Heart left ventricle (tissue), 16 donors: ENCODE measurements at regions of chr14 and their contacts with region 1.

Region 1: DNA sequence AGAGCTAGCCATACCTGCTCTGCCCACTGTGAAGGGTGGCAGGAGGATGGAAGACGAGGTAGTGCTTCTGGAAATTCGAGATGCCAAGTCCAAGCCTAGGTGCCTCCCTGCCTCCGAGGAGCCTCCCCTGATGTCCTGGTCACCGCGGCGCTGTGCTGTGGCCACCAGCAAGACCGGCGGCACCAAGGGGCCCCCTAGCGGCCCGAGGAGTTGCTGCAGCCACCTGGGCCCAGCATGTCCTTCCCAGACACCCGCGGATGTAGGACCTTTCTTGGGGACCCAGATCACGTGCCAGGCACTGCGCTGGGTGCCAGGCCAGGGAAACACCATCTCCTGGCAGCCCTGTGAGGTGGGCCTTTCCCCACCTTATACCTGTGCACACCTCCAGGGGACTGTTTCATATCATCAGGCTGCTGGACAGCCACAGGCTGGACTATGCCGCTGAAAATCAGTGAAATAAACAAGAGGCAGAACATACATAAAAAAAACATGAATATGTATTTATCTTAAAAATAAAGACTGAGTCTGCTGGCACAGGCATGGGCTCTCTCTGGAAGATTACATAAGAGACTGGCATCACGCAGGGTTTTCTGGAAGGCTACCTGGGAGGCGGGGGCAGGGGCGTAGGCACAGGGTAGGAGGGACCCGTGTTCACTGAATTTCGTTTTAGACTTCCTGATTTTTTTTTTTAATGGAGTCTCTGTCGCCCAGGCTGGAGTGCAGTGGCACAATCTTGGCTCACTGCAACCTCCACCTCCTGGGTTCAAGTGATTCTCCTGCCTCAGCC is 15.9 kb upstream of the HHIPL1 start:
- DNase-seq: peak; percentile 76 to 88 (median 78)
- ATAC-seq: peak; percentile 61 to 95 (median 89)
- H3K4me3 ChIP-seq: no peak overlapping the region
- H3K27ac ChIP-seq: no peak overlapping the region
- H3K4me1 ChIP-seq: peaks cover 0 to 7% (median 2%) of the 10 kb centered on the region in 12 donors
- H3K27me3 ChIP-seq: no peaks in the 10 kb centered on the region
- CTCF ChIP-seq: peak; percentile 94 to 100 (median 98)
- POLR2A ChIP-seq: no peak

Region 2: GRCh38 chr14:99518441-99519346 is 110.3 kb before region 1 on chr14:
- intact Hi-C with region 1: loop called (anchors 1 to 2 kb)
- DNase-seq: peak; percentile 59 to 87 (median 71)
- ATAC-seq: peak; percentile 46 to 62 (median 54)
- H3K4me3 ChIP-seq: no peak overlapping the region
- H3K27ac ChIP-seq: no peak overlapping the region
- H3K4me1 ChIP-seq: peaks cover 0 to 31% (median 20%) of the 10 kb centered on the region in 12 donors
- H3K27me3 ChIP-seq: no peaks in the 10 kb centered on the region
- CTCF ChIP-seq: peak; percentile 93 to 99 (median 98)
- POLR2A ChIP-seq: no peak

Region 3: DNA sequence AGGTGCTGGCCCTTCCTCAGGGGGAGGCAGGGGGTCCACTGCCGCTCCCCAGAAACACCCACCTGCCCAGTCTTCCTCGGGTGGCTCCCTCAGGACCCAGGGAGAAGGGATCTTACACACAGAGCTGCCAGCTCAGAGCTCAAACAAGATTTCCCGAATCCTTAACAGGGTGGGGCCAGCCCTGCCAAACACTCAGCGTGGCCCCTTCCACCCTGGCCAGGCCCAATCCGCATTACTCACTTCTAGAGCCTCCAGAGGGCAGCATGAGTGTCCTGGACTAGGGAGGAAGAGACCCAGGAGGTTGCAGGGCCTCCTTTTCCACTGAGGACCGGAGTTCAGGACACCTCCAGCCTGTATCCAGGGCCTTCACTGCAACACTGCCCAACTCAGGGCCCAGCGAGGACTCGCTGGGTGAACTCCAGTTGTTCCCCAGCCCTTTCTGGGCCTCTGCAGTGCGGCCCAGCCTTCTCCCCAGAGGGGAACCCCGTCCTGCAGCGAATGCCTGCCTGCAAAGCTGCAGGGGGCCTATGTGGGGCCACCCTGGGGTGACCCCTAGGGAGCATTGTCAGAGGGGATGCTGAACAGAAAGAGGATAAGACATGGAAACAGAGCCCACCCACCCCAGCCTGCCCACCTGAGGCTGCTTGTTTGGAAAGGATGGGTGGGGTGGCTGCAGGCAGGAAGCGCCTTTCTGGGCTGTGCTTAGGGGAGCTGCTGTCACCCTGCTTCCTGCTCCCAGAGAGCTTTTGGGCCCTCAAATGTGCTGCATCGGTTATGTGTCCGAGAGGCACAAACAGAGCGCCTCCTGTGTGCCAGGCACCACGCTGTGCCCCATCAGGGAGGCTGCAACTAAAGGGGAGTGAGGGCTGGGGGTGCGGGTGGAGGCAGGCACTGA is 104.0 kb before region 1 on chr14:
- intact Hi-C with region 1: loop called in 1 of 10 experiments (anchors 2 kb)
- DNase-seq: peak in 3 of 5 donors; percentile 25 to 46 (median 40)
- ATAC-seq: peak in 3 of 4 donors; percentile 33 to 67 (median 46)
- H3K4me3 ChIP-seq: no peak overlapping the region
- H3K27ac ChIP-seq: peak overlapping the region in 11 of 12 donors; percentile 26 to 84 (median 61)
- H3K4me1 ChIP-seq: peaks cover 6 to 62% (median 38%) of the 10 kb centered on the region in 12 donors
- H3K27me3 ChIP-seq: no peaks in the 10 kb centered on the region
- CTCF ChIP-seq: peak in 10 of 12 donors; percentile 8 to 51 (median 27)
- POLR2A ChIP-seq: no peak

Region 4: GRCh38 chr14:99563233-99564129 is 65.5 kb before region 1 on chr14:
- intact Hi-C with region 1: loop called in 2 of 10 experiments (anchors 2 to 5 kb)
- DNase-seq: peak; percentile 76 to 91 (median 86)
- ATAC-seq: peak; percentile 73 to 83 (median 76)
- H3K4me3 ChIP-seq: no peak overlapping the region
- H3K27ac ChIP-seq: peak overlapping the region in 10 of 12 donors; percentile 20 to 86 (median 70)
- H3K4me1 ChIP-seq: peaks cover 6 to 80% (median 56%) of the 10 kb centered on the region in 12 donors
- H3K27me3 ChIP-seq: no peaks in the 10 kb centered on the region
- CTCF ChIP-seq: peak in 11 of 12 donors; percentile 14 to 57 (median 45)
- POLR2A ChIP-seq: no peak